Heart left ventricle (tissue), 16 donors: ENCODE measurements at regions of chr12 and their contacts with region 1.

Region 1: GRCh38 chr12:104090687-104091086 is 26.4 kb downstream of the HCFC2 start:
- DNase-seq: no peak
- ATAC-seq: no peak
- H3K4me3 ChIP-seq: no peak overlapping the region
- H3K27ac ChIP-seq: no peak overlapping the region
- H3K4me1 ChIP-seq: no peaks in the 10 kb centered on the region
- H3K27me3 ChIP-seq: no peaks in the 10 kb centered on the region
- CTCF ChIP-seq: no peak
- POLR2A ChIP-seq: no peak

Region 2: GRCh38 chr12:102879144-102879763 is 1211.4 kb before region 1 on chr12:
- intact Hi-C with region 1: no loop called
- DNase-seq: no peak
- ATAC-seq: peak in 3 of 4 donors; percentile 20 to 71 (median 54)
- H3K4me3 ChIP-seq: no peak overlapping the region
- H3K27ac ChIP-seq: no peak overlapping the region
- H3K4me1 ChIP-seq: no peaks in the 10 kb centered on the region
- H3K27me3 ChIP-seq: peaks cover 0 to 25% (median 0%) of the 10 kb centered on the region in 9 donors
- CTCF ChIP-seq: peak in 6 of 12 donors; percentile 9 to 32 (median 24)
- POLR2A ChIP-seq: no peak

Region 3: GRCh38 chr12:103956516-103957027 is 134.1 kb before region 1 on chr12:
- intact Hi-C with region 1: loop called in 1 of 10 experiments (anchors 10 kb)
- DNase-seq: peak in 1 of 5 donors; percentile 68
- ATAC-seq: peak; percentile 25 to 57 (median 46)
- H3K4me3 ChIP-seq: peak overlapping the region; percentile 53 to 90 (median 80)
- H3K27ac ChIP-seq: peak overlapping the region; percentile 84 to 98 (median 95)
- H3K4me1 ChIP-seq: peaks cover 7 to 31% (median 20%) of the 10 kb centered on the region in 12 donors
- H3K27me3 ChIP-seq: no peaks in the 10 kb centered on the region
- CTCF ChIP-seq: no peak
- POLR2A ChIP-seq: no peak

Region 4: DNA sequence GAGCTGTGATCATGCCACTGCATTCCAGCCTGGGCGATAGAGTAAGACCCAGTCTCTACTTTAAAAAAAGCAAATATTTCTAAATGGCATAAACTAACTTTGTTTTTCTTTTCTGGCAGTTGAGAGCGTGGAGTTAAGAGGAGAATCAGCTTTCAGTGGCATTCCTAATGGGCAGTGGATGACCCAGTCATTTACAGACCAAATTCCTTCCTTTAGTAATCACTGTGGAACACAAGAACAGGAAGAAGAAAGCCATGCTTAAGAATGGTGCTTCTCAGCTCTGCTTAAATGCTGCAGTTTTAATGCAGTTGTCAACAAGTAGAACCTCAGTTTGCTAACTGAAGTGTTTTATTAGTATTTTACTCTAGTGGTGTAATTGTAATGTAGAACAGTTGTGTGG is 103.9 kb before region 1 on chr12:
- intact Hi-C with region 1: loop called in 1 of 10 experiments (anchors 10 kb)
- DNase-seq: no peak
- ATAC-seq: no peak
- H3K4me3 ChIP-seq: no peak overlapping the region
- H3K27ac ChIP-seq: no peak overlapping the region
- H3K4me1 ChIP-seq: no peaks in the 10 kb centered on the region
- H3K27me3 ChIP-seq: no peaks in the 10 kb centered on the region
- CTCF ChIP-seq: no peak
- POLR2A ChIP-seq: no peak

Region 5: GRCh38 chr12:104250366-104251125 is 159.9 kb after region 1 on chr12:
- intact Hi-C with region 1: no loop called
- DNase-seq: no peak
- ATAC-seq: no peak
- H3K4me3 ChIP-seq: no peak overlapping the region
- H3K27ac ChIP-seq: peak overlapping the region in 2 of 12 donors; percentile 24 to 29
- H3K4me1 ChIP-seq: peaks cover 0 to 9% (median 0%) of the 10 kb centered on the region in 12 donors
- H3K27me3 ChIP-seq: no peaks in the 10 kb centered on the region
- CTCF ChIP-seq: no peak
- POLR2A ChIP-seq: no peak